ENCODE measurements at regions of chr5 and their contacts with region 1.

Region 1: DNA sequence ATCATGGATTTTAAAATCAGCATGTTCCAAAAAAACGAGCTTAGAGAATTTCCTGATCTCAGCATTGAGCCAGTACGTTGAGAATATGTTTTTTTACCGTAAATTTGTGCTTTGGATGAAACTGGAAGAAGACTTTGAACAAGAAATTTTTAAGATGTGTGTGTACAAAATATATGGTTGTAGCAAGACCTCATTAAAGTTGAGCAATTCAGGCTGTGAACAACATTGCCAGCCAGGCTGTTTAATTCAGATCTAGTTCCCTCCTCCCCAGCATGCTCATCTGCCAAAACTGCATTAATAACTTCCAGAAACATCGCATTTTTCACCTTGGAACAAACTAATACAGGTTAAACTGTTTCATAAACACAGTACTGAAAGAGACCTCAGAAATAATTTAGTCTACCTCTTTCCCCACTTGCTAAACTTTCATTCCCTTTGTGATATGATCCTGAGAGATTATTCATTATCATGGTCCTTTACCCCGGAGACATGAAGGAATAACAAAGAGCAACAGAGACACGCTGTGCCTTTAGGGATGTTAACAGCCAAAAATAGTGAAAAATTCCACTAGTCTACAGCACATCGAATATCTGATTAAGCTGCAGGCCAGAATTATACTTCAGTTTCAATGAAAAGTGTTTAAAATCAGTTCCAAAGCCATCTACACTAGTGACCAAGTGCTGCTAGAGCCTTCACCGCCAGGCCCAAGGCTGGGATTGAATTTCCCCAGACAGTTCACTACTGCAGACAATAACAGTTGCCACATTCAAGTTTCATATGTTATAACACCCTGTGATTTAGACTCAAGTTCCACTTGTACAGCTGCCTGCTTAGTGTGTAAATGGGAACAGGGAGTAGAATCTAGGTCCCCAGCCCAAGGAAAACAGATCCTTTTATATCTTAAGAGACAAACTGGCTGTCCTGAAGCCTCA is 89.6 kb downstream of the EFNA5 start:
- DNase-seq: no peak

Region 2: GRCh38 chr5:106940986-106941385 is 640.2 kb before region 1 on chr5:
- intact Hi-C with region 1: loop called (anchors 10 kb)
- DNase-seq: no peak

Region 3: GRCh38 chr5:107449369-107449768 is 131.8 kb before region 1 on chr5:
- intact Hi-C with region 1: no loop called
- DNase-seq: no peak